ENCODE measurements at regions of chr16 and their contacts with region 1.

Region 1: GRCh38 chr16:87145181-87146176 is 171.7 kb downstream of the C16orf95 start:
- DNase-seq: no peak
- ATAC-seq: no peak
- H3K4me3 ChIP-seq: no peak overlapping the region
- H3K4me3 Mint-ChIP-seq: no peak overlapping the region
- H3K27ac ChIP-seq: no peak overlapping the region
- H3K27ac Mint-ChIP-seq: no peak overlapping the region
- H3K4me1 ChIP-seq: no peaks in the 10 kb centered on the region
- H3K4me1 Mint-ChIP-seq: no peaks in the 10 kb centered on the region
- H3K27me3 ChIP-seq: no peaks in the 10 kb centered on the region
- H3K27me3 Mint-ChIP-seq: peaks cover 0 to 4% (median 0%) of the 10 kb centered on the region in 5 donors

Region 2: DNA sequence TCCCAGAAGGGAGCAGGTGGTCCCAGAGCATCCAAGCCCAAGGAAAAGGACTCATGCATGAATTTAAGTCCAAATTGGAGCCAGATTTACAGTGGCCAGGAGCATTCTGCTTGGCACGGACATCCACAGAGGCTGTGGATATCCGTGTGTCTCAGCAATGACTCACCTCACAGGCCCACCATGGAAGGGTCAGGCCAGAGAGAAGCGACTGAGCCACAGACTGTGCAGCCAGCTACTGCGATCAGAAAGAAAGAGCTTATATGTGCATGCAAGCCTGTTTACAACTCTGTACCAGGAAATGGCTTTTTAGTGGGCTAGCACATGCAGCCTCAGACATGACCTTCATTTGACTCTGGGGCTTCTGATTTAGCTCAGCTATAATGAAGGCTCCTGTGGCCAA is 59.3 kb before region 1 on chr16:
- CTCF ChIA-PET with region 1: no interaction called
- POLR2A ChIA-PET with region 1: no interaction called
- intact Hi-C with region 1: loop called in 1 of 2 experiments (anchors 10 kb)
- DNase-seq: no peak
- ATAC-seq: no peak
- H3K4me3 ChIP-seq: no peak overlapping the region
- H3K4me3 Mint-ChIP-seq: no peak overlapping the region
- H3K27ac ChIP-seq: no peak overlapping the region
- H3K27ac Mint-ChIP-seq: no peak overlapping the region
- H3K4me1 ChIP-seq: no peaks in the 10 kb centered on the region
- H3K4me1 Mint-ChIP-seq: no peaks in the 10 kb centered on the region
- H3K27me3 ChIP-seq: no peaks in the 10 kb centered on the region
- H3K27me3 Mint-ChIP-seq: peaks cover 0 to 6% (median 4%) of the 10 kb centered on the region in 5 donors

Measured in naive thymus-derived CD4-positive, alpha-beta T cell (primary cell).